Activated CD4-positive, alpha-beta T cell treated with anti-CD3 and anti-CD28 coated beads for 36 hours (primary cell): ENCODE measurements at regions of chr1 and their contacts with region 1.

Region 1: DNA sequence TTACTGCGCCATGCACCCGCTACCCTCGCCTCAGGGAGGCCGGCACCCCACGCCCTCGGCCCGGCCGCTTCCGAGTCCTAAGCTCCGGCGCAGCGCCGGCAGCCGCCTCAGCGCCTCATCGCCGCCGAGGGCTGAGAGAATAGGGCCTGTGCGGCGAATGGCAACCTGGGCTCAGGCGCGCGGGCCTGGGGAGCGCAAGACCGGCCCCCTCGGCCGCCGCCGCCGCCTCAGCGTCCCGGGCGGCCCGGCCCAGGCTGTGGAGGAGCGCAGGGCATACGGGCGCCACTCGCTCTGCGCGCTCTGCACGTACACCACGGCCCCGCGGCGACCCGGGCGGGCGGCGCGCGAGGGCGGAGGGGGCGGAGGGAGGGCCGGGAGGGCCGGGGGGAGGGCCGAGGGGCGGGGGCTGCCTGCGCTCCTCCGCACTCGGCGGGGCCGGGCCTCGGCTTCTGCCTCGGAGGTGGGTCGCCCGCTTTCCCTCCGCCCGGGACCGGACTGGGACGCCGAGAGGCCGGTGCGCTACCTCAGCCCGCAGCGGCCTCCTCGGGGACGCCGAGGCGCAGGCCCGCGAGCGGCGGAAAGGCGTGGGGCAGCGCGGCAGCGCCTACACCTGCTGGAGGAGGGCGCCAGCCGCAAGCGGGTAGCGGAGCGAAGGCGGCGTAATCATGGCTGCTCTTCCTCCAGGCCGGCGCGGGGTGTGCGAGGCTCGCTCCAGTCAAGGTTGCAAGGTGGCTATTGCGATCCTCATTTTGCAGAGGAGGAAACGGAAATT is at the start of gene EGLN1:
- DNase-seq: peak; percentile 92
- ATAC-seq: peak; percentile 83
- H3K4me3 Mint-ChIP-seq: peak within 1 kb of the TSS; percentile 86
- H3K27ac Mint-ChIP-seq: peak within 1 kb of the TSS; percentile 88
- H3K4me1 Mint-ChIP-seq: peaks cover 31% of the 10 kb centered on the region
- H3K27me3 Mint-ChIP-seq: no peaks in the 10 kb centered on the region
- total RNA-seq, gene EGLN1: 31.5 to 43.7 TPM

Region 2: GRCh38 chr1:230867903-230868735 is 554.1 kb before region 1 on chr1 and contains the start of gene C1orf198:
- CTCF ChIA-PET with region 1: no interaction called
- POLR2A ChIA-PET with region 1: no interaction called
- intact Hi-C with region 1: loop called in 1 of 2 experiments (anchors 2 kb)
- DNase-seq: peak; percentile 86
- ATAC-seq: peak; percentile 90
- H3K4me3 Mint-ChIP-seq: peak within 1 kb of the TSS; percentile 80
- H3K27ac Mint-ChIP-seq: peak within 1 kb of the TSS; percentile 21
- H3K4me1 Mint-ChIP-seq: peaks cover 22% of the 10 kb centered on the region
- H3K27me3 Mint-ChIP-seq: peaks cover 14% of the 10 kb centered on the region
- total RNA-seq, gene C1orf198: 5.8 to 6.9 TPM

Region 3: DNA sequence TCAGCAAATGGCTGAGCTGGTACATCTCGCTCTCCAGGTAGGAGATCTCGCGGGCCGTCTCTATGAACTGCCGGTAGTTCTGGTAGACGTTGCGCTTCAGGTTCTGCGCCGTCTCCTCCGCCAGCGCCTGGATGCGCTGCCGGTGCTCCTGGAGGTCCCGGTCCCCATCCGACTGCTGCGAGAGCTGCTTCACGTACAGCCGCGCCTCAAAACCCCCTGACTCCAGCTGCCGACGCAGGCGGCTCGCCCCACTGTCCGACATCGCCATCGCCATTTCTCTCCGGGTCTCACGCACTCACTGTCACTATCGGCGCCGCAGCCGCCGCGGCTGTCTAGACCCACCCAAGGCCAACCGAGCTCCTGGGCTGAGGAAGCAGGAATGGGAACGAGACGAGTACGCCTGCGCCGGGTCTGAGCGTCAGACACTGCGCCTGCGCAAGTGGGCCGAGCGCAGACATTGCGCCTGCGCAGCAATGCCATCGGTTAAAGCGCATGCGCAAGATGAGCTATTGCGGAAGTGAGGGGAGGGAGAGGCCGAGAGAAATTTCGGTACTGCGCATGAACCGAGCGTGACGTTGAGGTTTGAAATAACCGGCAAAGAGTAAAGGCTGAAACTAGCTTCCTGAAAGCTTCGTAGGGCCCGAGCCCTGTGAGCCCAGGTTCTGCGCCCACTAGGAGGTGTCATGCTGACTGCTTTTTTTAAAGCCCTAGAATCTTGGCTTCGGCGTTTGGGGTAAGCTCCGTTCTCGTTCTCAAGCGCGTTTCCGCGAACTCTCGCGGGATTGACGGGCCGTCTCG is 84.5 kb before region 1 on chr1 and contains the start of gene EXOC8:
- CTCF ChIA-PET with region 1: interaction called, 3 read pairs
- POLR2A ChIA-PET with region 1: interaction called, 4 read pairs
- intact Hi-C with region 1: loop called (anchors 1 to 5 kb)
- DNase-seq: peak; percentile 97
- ATAC-seq: peak; percentile 82
- H3K4me3 Mint-ChIP-seq: peak within 1 kb of the TSS; percentile 93
- H3K27ac Mint-ChIP-seq: peak within 1 kb of the TSS; percentile 98
- H3K4me1 Mint-ChIP-seq: peaks cover 44% of the 10 kb centered on the region
- H3K27me3 Mint-ChIP-seq: no peaks in the 10 kb centered on the region
- total RNA-seq, gene EXOC8: 10.0 to 13.7 TPM

Region 4: GRCh38 chr1:231376875-231377549 is 45.2 kb before region 1 on chr1:
- CTCF ChIA-PET with region 1: no interaction called
- POLR2A ChIA-PET with region 1: no interaction called
- intact Hi-C with region 1: loop called (anchors 5 kb)
- DNase-seq: peak; percentile 48
- ATAC-seq: peak; percentile 89
- H3K4me3 Mint-ChIP-seq: no peak overlapping the region
- H3K27ac Mint-ChIP-seq: peak overlapping the region; percentile 68
- H3K4me1 Mint-ChIP-seq: peaks cover 38% of the 10 kb centered on the region
- H3K27me3 Mint-ChIP-seq: no peaks in the 10 kb centered on the region

Region 5: GRCh38 chr1:231460614-231461013 is 38.4 kb after region 1 on chr1:
- CTCF ChIA-PET with region 1: no interaction called
- POLR2A ChIA-PET with region 1: no interaction called
- intact Hi-C with region 1: loop called (anchors 1 to 5 kb)
- DNase-seq: peak; percentile 77
- ATAC-seq: peak; percentile 66
- H3K4me3 Mint-ChIP-seq: peak overlapping the region; percentile 36
- H3K27ac Mint-ChIP-seq: no peak overlapping the region
- H3K4me1 Mint-ChIP-seq: peaks cover 24% of the 10 kb centered on the region
- H3K27me3 Mint-ChIP-seq: peaks cover 57% of the 10 kb centered on the region

Region 6: DNA sequence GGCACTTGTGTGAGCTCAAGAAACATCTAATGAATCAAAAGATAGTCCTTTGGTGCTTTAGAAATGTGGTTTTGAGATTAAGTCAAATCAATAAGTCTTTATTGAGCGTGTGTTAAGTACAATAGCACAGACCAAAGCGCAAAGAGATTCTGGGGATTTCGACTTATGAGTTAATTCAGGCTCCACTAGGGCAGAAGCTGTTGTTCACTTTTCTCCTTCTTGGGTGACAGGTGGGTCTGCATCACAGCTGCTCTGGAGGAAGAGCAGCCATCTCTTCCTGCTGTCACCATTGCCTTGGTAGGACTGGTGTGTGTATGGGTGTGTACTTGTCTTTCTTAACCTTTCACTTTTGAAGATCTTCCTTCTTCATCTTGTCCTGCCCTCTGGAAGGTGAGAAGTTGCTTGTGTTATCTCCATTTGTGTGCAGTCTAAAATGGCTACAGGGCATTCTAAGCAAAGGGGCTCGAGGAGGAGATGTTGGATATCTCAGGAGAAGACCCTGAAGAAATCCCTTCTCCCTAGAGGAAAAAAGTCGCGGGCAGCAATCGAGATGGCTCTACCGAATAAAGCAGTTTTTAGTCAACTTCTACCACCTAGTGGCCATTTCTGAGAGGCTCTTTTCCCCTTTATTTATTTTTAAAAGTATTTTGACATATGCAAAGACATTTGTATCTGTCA is 181.6 kb after region 1 on chr1:
- CTCF ChIA-PET with region 1: interaction called, 3 read pairs
- POLR2A ChIA-PET with region 1: no interaction called
- intact Hi-C with region 1: loop called (anchors 5 kb)
- DNase-seq: peak; percentile 50
- ATAC-seq: peak; percentile 85
- H3K4me3 Mint-ChIP-seq: peak overlapping the region; percentile 73
- H3K27ac Mint-ChIP-seq: peak overlapping the region; percentile 80
- H3K4me1 Mint-ChIP-seq: peaks cover 5% of the 10 kb centered on the region
- H3K27me3 Mint-ChIP-seq: no peaks in the 10 kb centered on the region